Dorsolateral prefrontal cortex (tissue), 120 donors: ENCODE measurements at regions of chr6 and their contacts with region 1.

Region 1: DNA sequence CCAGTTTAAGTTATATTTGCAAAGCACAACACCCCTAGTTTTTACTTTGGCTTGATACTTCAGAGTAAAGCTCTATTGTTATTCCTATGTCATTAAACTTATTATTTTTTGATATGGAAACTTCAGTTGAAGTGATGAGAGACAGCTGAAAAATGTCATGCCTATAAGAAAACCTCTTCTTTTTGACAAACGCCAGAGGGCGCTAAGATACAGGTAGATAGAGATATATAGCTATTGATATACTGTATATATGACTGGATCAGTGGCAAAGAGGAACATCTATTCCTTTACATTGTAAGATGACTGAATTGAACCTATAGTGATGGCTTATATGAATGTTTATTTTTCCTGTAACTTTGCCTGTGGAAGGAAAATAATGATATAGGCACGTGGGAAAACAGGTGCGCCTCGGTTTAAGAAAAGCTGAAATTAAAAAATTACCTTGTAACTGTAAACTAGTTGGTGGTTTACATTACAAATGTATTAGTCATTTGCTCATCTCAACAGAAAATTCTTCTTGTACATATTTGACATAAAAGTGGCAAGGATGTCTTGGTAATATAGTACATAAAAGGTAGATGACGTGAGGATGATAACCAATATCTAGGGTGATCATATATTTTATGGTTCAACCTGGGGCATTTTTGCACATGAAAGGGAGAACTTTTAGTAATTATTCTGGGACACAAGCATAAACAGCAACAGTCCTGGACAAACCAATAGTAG is 74.1 kb downstream of the LAMA4 start:
- DNase-seq: peak in 3 of 10 donors; percentile 15 to 36 (median 33)
- H3K4me3 ChIP-seq: no peak overlapping the region
- H3K27ac ChIP-seq: no peak overlapping the region
- H3K27me3 ChIP-seq: no peaks in the 10 kb centered on the region
- CTCF ChIP-seq: peak; percentile 71 to 98 (median 84)

Region 2: DNA sequence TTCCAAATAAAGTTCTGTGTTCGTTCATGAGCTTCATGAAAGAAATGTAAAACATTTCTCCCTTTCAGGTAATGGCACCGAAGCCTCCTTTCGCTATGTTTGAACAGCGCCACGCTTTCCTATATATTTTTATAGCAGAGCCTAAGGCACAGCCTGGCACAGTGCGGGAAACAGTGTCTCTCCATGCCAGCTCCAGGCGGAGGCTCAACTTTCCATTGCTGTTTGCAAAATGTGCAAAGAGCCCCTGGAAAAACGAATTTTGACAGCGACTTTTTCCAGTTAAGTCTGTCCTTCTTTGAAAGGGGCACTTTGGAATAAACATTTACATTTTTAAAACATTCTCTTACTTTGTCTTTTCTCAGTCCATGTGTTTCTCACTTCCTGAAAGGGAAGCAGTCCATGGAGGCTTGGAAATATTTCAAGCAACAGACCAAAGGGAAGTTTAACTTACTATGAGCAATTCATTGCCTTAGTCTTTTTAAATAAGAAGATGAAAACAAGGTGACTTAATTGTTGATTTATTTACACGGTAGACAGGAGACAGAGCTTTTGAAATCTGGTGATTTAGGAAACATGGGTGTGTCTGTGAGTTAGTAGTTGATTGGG is 125.6 kb before region 1 on chr6:
- intact Hi-C with region 1: no loop called
- DNase-seq: no peak
- H3K4me3 ChIP-seq: no peak overlapping the region
- H3K27ac ChIP-seq: no peak overlapping the region
- H3K27me3 ChIP-seq: no peaks in the 10 kb centered on the region
- CTCF ChIP-seq: no peak

Region 3: GRCh38 chr6:112311950-112312547 is 131.8 kb after region 1 on chr6:
- intact Hi-C with region 1: loop called (anchors 5 kb)
- DNase-seq: no peak
- H3K4me3 ChIP-seq: no peak overlapping the region
- H3K27ac ChIP-seq: no peak overlapping the region
- H3K27me3 ChIP-seq: no peaks in the 10 kb centered on the region
- CTCF ChIP-seq: peak; percentile 55 to 90 (median 76)

Region 4: DNA sequence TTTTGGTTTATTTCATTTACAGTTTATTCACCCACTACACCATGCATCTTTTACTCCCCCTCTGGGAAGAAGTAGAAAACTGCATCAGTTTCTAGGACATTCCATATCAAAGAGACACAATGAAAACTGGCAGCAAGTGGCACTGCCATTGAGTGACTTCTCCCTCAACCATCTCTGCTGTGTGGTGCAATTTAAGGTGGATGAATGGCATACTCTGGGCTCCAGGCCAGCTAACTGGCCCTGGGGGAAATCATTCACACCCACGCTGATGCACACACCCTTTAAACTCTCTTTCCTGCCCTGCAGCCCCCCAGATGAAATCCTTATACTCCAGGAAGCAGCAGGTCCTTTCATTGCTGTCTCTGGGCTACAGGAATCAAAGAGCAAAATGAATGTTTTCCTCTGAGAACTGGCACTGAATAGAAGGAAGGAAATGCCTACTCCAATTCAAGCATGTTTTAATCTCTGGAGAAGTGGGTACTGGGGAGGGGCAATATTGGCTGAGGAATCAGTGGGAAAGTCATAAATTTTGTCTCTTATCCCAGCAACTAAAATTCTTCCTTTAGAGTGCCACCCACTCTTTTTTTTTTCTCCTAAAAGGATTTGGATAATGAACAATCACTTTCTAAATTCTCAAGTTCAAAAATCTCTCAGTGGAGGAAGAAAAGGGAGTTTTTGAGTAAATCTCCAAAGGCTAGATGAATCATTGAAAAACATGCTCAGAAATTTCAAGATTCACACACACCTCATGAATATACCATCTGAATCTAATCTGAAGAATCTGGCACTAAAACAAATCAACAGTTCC is 150.0 kb after region 1 on chr6:
- intact Hi-C with region 1: no loop called
- DNase-seq: no peak
- H3K4me3 ChIP-seq: no peak overlapping the region
- H3K27ac ChIP-seq: peak overlapping the region in 10 of 59 donors; percentile 4 to 62 (median 18)
- H3K27me3 ChIP-seq: no peaks in the 10 kb centered on the region
- CTCF ChIP-seq: no peak

Region 5: GRCh38 chr6:113292646-113293422 is 1112.6 kb after region 1 on chr6:
- intact Hi-C with region 1: no loop called
- DNase-seq: no peak
- H3K4me3 ChIP-seq: peak overlapping the region in 15 of 59 donors; percentile 1 to 56 (median 27)
- H3K27ac ChIP-seq: peak overlapping the region in 1 of 59 donors; percentile 10
- H3K27me3 ChIP-seq: no peaks in the 10 kb centered on the region
- CTCF ChIP-seq: no peak

Region 6: DNA sequence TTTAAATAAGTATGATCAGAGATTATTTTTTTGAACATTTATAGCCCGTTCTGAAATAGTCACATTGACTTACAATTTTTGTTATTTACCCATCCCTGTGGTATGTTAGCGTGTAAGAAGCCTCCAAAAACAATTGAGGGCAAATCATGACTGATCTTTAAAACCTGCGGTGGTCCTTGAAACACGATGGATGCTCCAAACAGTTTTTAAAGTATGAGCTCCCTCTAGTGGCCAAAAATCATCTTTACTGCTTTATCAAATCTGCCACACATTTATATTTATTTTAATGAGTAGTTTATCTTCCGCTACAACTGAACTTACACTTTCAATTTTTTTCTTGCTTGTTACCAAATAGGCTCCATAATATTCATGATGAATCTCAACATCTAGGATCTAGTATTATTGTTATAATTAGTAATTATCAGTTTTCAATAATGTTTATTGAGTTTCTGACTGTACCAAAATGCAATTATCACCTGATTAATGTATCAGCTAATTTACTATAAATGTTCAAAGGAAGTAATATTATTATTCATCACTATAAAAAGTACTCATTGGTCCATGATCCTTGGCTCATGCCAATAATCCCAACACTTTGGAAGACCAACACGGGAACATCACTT is 1729.1 kb after region 1 on chr6:
- intact Hi-C with region 1: loop called in 1 of 2 experiments (anchors 10 kb)
- DNase-seq: peak in 1 of 10 donors; percentile 8
- H3K4me3 ChIP-seq: peak overlapping the region in 5 of 59 donors; percentile 11 to 30 (median 17)
- H3K27ac ChIP-seq: no peak overlapping the region
- H3K27me3 ChIP-seq: no peaks in the 10 kb centered on the region
- CTCF ChIP-seq: peak; percentile 60 to 96 (median 82)